Mammary epithelial cell (primary cell): ENCODE measurements at regions of chr7 and their contacts with region 1.

Region 1: DNA sequence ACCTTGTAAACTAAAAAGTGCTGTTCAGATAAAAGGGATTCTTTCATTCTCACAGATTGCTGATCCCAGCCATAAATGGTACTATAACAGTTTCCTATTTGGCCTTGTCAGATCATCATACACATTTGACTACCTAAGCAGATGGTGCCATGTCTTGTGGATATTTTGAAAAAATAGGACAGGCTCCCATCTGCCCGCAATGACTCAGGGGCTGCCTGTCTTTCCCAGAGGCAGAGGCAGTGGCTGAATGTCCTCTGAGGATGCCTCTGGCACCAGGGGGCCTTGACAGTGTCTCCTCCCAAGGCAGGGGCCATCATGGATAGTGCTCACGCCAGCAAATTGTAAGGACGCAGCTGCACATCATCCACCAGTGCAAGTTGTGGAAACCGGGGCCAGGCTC is 323.0 kb upstream of the PODXL start:
- DNase-seq: no peak
- H3K4me3 ChIP-seq: no peak overlapping the region
- H3K27ac ChIP-seq: no peak overlapping the region
- H3K4me1 ChIP-seq: peaks cover 6% of the 10 kb centered on the region
- H3K27me3 ChIP-seq: peaks cover 3% of the 10 kb centered on the region
- CTCF ChIP-seq: no peak

Region 2: DNA sequence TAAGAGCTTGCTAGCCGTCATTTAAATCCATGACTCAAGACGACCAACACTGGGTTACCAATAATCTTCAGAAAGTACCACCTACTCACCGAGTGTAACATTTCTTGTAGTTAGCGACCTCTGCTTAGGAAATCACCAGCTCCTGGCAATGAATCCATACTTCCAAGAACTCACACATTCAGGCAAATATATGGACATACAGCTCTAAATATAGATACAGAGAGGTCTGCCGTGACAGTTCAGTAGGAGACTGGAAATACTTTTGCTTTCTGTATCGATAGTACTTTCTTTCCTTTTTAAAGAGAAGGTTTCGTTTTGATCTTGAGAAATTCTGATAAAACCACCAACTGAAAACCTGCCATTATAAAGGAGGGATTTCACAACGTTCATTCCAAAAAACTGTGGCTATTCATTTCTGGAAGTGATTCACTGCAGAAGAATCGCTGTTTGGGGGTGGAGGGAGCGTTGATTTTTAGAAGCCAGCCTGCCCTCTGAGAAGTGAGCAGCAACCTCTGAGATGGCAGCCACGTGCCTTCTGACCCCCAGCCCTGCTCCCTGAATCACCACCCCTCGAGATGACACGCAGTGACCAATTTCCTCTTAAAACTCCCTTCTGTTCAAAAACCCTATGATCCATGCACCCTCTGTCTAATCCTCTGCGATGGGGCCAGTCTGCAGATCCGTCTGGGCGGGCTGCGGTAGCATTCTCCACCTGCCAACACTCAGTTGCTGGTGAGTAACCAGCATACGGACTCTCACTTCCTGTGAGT is 966.4 kb before region 1 on chr7:
- CTCF ChIA-PET with region 1: no interaction called
- dilution Hi-C with region 1: no loop called
- in situ Hi-C with region 1: no loop called
- intact Hi-C with region 1: no loop called
- DNase-seq: peak; percentile 99
- H3K4me3 ChIP-seq: peak overlapping the region; percentile 50 to 96 (median 90)
- H3K27ac ChIP-seq: peak overlapping the region; percentile 97
- H3K4me1 ChIP-seq: peaks cover 61% of the 10 kb centered on the region
- H3K27me3 ChIP-seq: no peaks in the 10 kb centered on the region
- CTCF ChIP-seq: no peak

Region 3: DNA sequence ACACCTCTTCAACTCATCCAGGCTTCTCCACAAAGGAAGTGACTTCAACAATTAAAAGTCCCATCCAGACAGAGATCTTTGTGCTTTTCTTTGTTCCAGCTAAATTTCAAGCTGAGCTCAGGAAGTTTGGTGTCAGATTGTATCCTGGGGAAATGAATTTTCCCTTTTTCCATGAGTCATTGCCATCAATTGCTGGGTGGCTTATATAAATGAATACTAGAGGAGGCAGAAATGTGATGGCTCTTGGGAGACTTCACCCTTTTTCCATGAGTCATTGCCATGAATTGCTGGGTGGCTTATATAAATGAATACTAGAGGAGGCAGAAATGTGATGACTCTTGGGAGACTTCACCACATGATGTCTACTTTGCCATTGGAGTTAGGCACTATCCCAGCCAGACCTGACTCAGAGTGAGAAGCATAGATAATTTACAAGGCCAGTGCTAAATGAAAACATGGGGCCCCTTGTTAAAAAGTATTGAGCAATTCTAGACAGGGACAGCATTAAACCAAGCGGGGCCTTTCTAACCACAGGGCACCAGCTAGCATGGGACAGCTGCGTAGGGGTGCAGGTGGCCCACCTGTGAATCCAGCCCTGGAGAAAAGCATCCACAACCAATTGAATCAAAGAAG is 16.2 kb after region 1 on chr7:
- CTCF ChIA-PET with region 1: no interaction called
- dilution Hi-C with region 1: no loop called
- in situ Hi-C with region 1: no loop called
- intact Hi-C with region 1: loop called (anchors 2 kb)
- DNase-seq: peak; percentile 88
- H3K4me3 ChIP-seq: no peak overlapping the region
- H3K27ac ChIP-seq: peak overlapping the region; percentile 73
- H3K4me1 ChIP-seq: peaks cover 47% of the 10 kb centered on the region
- H3K27me3 ChIP-seq: no peaks in the 10 kb centered on the region
- CTCF ChIP-seq: no peak